Aorta (tissue), 5 donors: ENCODE measurements at regions of chr2 and their contacts with region 1.

Region 1: DNA sequence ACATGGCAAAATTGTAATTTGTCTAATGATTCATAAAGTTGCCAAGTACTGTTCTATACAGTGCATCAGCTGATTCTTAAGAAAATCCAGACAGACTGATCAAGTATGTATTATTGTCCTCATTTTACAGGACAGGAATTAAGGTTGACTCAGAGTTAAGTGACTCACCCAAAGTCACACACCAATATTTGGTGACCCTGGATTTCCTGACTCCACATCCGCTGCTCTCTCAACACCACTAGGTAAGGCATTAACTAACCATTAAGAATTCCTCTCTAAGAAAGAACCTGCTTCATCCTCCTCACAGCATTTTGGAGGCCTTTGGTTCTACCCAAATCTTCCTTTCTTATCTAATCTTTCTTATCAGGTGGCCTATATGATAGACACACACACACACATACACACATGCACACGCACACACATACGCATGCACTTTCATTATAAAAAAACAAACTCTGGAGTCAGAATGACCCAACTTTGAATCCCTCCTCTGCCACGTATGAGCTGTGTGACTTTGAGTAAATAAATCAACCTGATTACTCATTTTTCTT is 150.8 kb downstream of the ANKRD44 start:
- DNase-seq: no peak
- ATAC-seq: no peak
- H3K4me3 ChIP-seq: no peak overlapping the region
- H3K27ac ChIP-seq: no peak overlapping the region
- H3K4me1 ChIP-seq: peaks cover under 1 to 7% of the 10 kb centered on the region in 2 donors
- H3K27me3 ChIP-seq: no peaks in the 10 kb centered on the region

Region 2: DNA sequence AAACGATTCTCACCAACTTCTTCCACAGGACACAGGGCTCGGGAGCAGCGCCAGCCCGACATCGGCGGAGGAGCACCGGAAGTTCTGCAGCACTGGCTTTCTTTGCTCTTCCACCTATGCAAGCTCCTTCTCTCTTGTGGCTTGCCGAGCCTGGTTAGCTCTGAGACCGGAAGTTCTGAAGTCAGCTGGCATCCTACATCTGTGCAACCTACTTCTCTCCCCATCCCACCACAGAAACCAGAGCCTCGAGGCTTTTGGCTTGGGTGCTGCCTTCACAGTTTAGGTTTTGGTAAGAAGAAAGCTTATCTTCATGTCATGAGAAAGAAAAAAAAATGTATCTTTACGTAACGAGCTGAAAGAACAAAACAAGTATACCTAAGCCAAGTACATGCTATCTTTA is 39.2 kb after region 1 on chr2:
- intact Hi-C with region 1: loop called in 1 of 2 experiments (anchors 5 kb)
- DNase-seq: peak; percentile 77 to 78
- ATAC-seq: peak; percentile 66
- H3K4me3 ChIP-seq: peak overlapping the region in 1 of 2 donors; percentile 68
- H3K27ac ChIP-seq: peak overlapping the region; percentile 37 to 51
- H3K4me1 ChIP-seq: peaks cover 6 to 10% of the 10 kb centered on the region in 2 donors
- H3K27me3 ChIP-seq: no peaks in the 10 kb centered on the region

Region 3: DNA sequence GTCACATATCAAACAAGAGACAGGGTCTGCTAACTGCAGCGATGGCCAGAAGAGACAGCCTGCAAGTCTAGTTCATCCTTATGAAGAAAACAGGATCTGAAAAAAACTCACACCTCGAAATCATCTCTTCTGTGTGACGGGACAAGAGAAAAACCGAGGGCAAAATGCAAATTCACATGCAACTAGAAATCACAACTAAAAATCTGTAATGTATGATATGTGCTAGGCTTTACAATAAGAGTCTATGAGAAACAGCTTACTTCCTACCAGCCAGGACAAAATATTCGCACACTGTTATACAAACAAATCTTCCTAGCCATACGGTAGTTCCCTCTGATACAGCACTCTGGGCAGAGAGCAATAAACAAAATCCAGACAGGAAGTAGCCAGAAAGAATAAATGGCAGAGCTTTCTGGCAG is 102.1 kb after region 1 on chr2:
- intact Hi-C with region 1: no loop called
- DNase-seq: no peak
- ATAC-seq: peak; percentile 48
- H3K4me3 ChIP-seq: no peak overlapping the region
- H3K27ac ChIP-seq: no peak overlapping the region
- H3K4me1 ChIP-seq: no peaks in the 10 kb centered on the region
- H3K27me3 ChIP-seq: no peaks in the 10 kb centered on the region